ENCODE measurements at regions of chr7 and their contacts with region 1.

Region 1: DNA sequence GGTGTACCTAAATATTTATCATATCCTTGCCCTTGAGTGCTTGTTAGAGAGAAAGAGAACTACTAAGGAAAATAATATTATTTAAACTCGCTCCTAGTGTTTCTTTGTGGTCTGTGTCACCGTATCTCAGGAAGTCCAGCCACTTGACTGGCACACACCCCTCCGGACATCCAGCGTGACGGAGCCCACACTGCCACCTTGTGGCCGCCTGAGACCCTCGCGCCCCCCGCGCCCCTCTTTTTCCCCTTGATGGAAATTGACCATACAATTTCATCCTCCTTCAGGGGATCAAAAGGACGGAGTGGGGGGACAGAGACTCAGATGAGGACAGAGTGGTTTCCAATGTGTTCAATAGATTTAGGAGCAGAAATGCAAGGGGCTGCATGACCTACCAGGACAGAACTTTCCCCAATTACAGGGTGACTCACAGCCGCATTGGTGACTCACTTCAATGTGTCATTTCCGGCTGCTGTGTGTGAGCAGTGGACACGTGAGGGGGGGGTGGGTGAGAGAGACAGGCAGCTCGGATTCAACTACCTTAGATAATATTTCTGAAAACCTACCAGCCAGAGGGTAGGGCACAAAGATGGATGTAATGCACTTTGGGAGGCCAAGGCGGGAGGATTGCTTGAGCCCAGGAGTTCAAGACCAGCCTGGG is 11.4 kb downstream of the SERPINE1 start:
- DNase-seq: peak; percentile 97
- ATAC-seq: peak; percentile 83
- H3K4me3 ChIP-seq: peak overlapping the region; percentile 41; the same call in 1 of the 2 replicates
- H3K27ac ChIP-seq: peak overlapping the region; percentile 89
- H3K4me1 ChIP-seq: peaks cover 44% of the 10 kb centered on the region
- H3K27me3 ChIP-seq: no peaks in the 10 kb centered on the region
- CTCF ChIP-seq: peak; percentile 98

Region 2: DNA sequence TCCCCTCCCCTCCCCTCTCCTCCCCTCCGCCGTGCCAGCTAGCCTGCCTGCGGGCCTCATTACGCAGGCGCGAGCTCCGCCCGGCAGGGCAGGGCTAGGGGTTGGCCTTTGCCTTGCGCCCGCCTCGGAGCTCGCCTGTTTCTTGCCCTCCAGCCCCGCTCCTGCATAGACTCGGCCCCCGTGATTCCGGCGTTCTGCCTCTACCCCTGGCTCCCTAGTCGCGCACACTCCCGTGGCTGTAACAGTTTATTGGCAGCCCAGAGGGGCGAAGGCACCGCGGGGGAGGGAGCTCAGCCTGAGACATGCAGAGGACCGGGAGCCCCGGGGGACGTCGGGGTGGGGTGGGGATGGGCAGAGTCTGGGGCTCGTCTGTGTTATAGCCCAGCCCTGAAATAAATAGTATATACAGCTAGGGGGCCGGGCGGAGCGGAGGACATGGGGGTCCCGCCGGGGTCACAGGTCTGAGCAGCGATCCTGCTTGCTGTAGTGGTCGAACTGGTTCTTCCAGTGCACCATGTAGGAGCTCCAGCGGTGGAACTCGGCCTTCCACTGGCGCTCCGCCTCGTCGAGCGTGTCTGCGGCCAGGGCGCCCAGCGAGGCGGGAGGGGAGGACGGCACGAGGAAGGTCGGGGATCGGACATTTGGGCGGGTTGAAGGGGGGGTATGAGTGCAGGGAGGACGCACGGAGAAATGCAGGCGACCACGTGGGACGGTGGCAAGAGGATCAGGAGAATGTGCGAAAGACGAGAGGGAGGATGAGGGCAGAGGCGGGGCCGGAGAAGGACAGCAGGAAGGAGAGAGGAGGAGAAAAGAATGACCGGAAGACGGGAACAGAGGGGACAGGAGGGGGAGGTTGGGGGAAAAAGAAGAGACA is 248.3 kb before region 1 on chr7:
- CTCF ChIA-PET with region 1: no interaction called
- POLR2A ChIA-PET with region 1: interaction called, 19 read pairs
- intact Hi-C with region 1: loop called (anchors 10 kb)
- DNase-seq: peak; percentile 90
- ATAC-seq: peak; percentile 82
- H3K4me3 ChIP-seq: peak overlapping the region; percentile 72
- H3K27ac ChIP-seq: peak overlapping the region; percentile 89
- H3K4me1 ChIP-seq: peaks cover 37% of the 10 kb centered on the region
- H3K27me3 ChIP-seq: peaks cover 1% of the 10 kb centered on the region; the same call in 1 of the 2 replicates
- CTCF ChIP-seq: no peak

Region 3: GRCh38 chr7:101077303-101078089 is 60.8 kb before region 1 on chr7:
- CTCF ChIA-PET with region 1: no interaction called
- POLR2A ChIA-PET with region 1: no interaction called
- intact Hi-C with region 1: loop called (anchors 1 kb)
- DNase-seq: peak; percentile 90
- ATAC-seq: peak; percentile 99
- H3K4me3 ChIP-seq: no peak overlapping the region
- H3K27ac ChIP-seq: no peak overlapping the region
- H3K4me1 ChIP-seq: peaks cover 3% of the 10 kb centered on the region; the same call in 1 of the 2 replicates
- H3K27me3 ChIP-seq: no peaks in the 10 kb centered on the region
- CTCF ChIP-seq: peak; percentile 95

Region 4: GRCh38 chr7:101085162-101085987 is 53.0 kb before region 1 on chr7 and contains the start of gene TRIM56:
- CTCF ChIA-PET with region 1: interaction called, 3 read pairs
- POLR2A ChIA-PET with region 1: interaction called, 7 read pairs
- intact Hi-C with region 1: loop called (anchors 2 kb)
- DNase-seq: peak; percentile 95
- ATAC-seq: peak; percentile 88
- H3K4me3 ChIP-seq: peak within 1 kb of the TSS; percentile 84
- H3K27ac ChIP-seq: peak within 1 kb of the TSS; percentile 95
- H3K4me1 ChIP-seq: peaks cover 23% of the 10 kb centered on the region
- H3K27me3 ChIP-seq: no peaks in the 10 kb centered on the region
- CTCF ChIP-seq: no peak
- total RNA-seq, gene TRIM56: 10.6 and 14.8 TPM in 2 replicates

Region 5: DNA sequence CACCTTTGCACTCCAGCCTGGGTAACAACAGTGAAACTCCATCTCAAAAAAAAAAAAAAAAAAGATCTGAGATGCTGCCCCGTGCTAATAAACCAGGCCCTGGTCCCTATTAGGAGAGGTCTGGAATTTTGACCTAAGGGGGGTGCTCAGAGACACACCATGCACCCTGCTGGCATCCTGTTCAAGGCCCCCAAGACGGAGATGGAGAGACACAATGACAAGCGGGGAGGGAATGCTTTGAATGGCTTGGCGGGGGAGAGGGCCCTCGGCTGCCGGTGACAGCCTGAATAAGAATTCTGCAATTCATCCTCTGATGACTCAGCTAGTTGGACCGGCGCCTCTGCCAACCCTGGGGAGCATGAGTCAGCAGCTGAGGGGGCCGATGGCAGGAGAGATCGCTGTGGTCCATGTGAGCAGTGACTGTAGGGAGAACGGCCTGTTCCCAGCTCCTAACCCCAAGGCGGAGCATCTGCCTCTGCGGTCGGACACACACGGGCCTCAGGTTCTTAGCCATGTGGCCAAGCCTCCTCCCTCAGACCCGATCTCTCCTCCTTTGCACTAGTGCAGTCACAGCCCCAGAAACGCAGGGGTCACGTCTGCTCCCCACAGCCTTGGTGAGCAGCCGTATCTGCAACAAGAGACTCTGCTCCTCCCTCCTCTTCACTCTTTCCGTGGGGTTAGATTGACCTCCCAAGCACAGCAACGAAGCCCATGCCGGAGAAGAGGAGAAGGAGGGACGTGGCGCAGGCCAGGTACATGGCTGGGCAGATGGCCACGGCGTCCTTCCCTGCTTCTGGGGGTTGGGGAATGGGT is 38.2 kb before region 1 on chr7:
- CTCF ChIA-PET with region 1: no interaction called
- POLR2A ChIA-PET with region 1: interaction called, 3 read pairs
- intact Hi-C with region 1: loop called (anchors 1 kb)
- DNase-seq: peak; percentile 99
- ATAC-seq: peak; percentile 95
- H3K4me3 ChIP-seq: peak overlapping the region; percentile 9; the same call in 1 of the 2 replicates
- H3K27ac ChIP-seq: peak overlapping the region; percentile 81
- H3K4me1 ChIP-seq: peaks cover 27% of the 10 kb centered on the region
- H3K27me3 ChIP-seq: no peaks in the 10 kb centered on the region
- CTCF ChIP-seq: no peak

Region 6: DNA sequence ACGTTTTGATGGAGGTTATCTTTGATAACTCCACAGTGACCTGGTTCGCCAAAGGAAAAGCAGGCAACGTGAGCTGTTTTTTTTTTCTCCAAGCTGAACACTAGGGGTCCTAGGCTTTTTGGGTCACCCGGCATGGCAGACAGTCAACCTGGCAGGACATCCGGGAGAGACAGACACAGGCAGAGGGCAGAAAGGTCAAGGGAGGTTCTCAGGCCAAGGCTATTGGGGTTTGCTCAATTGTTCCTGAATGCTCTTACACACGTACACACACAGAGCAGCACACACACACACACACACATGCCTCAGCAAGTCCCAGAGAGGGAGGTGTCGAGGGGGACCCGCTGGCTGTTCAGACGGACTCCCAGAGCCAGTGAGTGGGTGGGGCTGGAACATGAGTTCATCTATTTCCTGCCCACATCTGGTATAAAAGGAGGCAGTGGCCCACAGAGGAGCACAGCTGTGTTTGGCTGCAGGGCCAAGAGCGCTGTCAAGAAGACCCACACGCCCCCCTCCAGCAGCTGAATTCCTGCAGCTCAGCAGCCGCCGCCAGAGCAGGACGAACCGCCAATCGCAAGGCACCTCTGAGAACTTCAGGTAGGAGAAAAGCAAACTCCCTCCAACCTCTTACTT is 11.6 kb before region 1 on chr7 and contains the start of gene SERPINE1:
- CTCF ChIA-PET with region 1: no interaction called
- POLR2A ChIA-PET with region 1: interaction called, 6 read pairs
- intact Hi-C with region 1: loop called (anchors 1 kb)
- DNase-seq: peak; percentile 62
- ATAC-seq: peak; percentile 59
- H3K4me3 ChIP-seq: peak within 1 kb of the TSS; percentile 52
- H3K27ac ChIP-seq: 0 out of 2 replicates have a peak within 1 kb of the TSS, but pooled peaks have one; percentile 21
- H3K4me1 ChIP-seq: peaks cover 40% of the 10 kb centered on the region
- H3K27me3 ChIP-seq: no peaks in the 10 kb centered on the region
- CTCF ChIP-seq: 0 out of 2 replicates have a peak, but pooled peaks have one; percentile 20
- total RNA-seq, gene SERPINE1: 46.1 and 52.5 TPM in 2 replicates

Region 7: DNA sequence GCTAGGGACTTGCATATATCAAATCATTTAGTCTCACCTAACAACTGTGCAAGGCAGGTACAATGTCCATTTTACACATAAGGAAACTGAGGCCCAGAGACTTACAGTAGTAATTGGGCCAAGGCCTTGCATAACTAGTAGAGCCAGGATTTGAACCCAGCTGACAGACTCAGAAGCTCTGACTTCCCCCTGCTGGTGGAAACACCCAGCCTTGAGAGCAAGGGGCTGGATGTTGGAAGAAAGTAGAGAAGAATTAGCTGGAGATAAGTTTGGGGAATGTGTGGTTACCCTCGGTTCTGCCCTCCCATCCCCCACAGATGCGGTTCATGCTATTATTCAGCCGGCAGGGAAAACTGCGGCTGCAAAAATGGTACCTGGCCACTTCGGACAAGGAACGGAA is 17.9 kb after region 1 on chr7:
- CTCF ChIA-PET with region 1: interaction called, 19 read pairs
- POLR2A ChIA-PET with region 1: no interaction called
- intact Hi-C with region 1: no loop called
- DNase-seq: no peak
- ATAC-seq: no peak
- H3K4me3 ChIP-seq: no peak overlapping the region
- H3K27ac ChIP-seq: peak overlapping the region; percentile 78
- H3K4me1 ChIP-seq: peaks cover 47% of the 10 kb centered on the region
- H3K27me3 ChIP-seq: no peaks in the 10 kb centered on the region
- CTCF ChIP-seq: 0 out of 2 replicates have a peak, but pooled peaks have one; percentile 16